Esophagus muscularis mucosa (tissue), 4 donors: ENCODE measurements at regions of chr14 and their contacts with region 1.

Region 1: GRCh38 chr14:23379366-23380196 is 2.7 kb downstream of the CMTM5 start:
- DNase-seq: no peak
- H3K4me3 ChIP-seq: no peak overlapping the region
- H3K27ac ChIP-seq: no peak overlapping the region
- H3K4me1 ChIP-seq: peaks cover 0 to 23% (median 15%) of the 10 kb centered on the region in 4 donors
- H3K27me3 ChIP-seq: peaks cover 0 to 16% (median 0%) of the 10 kb centered on the region in 4 donors
- CTCF ChIP-seq: peak; percentile 87 to 97 (median 92)
- EP300 ChIP-seq: no peak
- POLR2A ChIP-seq: no peak

Region 2: GRCh38 chr14:23245282-23245681 is 134.3 kb before region 1 on chr14:
- intact Hi-C with region 1: no loop called
- DNase-seq: no peak
- H3K4me3 ChIP-seq: no peak overlapping the region
- H3K27ac ChIP-seq: no peak overlapping the region
- H3K4me1 ChIP-seq: no peaks in the 10 kb centered on the region
- H3K27me3 ChIP-seq: no peaks in the 10 kb centered on the region
- CTCF ChIP-seq: no peak
- EP300 ChIP-seq: no peak
- POLR2A ChIP-seq: no peak

Region 3: GRCh38 chr14:23259426-23259825 is 120.2 kb before region 1 on chr14:
- intact Hi-C with region 1: loop called (anchors 2 kb)
- DNase-seq: no peak
- H3K4me3 ChIP-seq: no peak overlapping the region
- H3K27ac ChIP-seq: no peak overlapping the region
- H3K4me1 ChIP-seq: peaks cover 0 to 13% (median 4%) of the 10 kb centered on the region in 4 donors
- H3K27me3 ChIP-seq: peaks cover 0 to 4% (median 0%) of the 10 kb centered on the region in 4 donors
- CTCF ChIP-seq: no peak
- EP300 ChIP-seq: no peak
- POLR2A ChIP-seq: no peak

Region 4: DNA sequence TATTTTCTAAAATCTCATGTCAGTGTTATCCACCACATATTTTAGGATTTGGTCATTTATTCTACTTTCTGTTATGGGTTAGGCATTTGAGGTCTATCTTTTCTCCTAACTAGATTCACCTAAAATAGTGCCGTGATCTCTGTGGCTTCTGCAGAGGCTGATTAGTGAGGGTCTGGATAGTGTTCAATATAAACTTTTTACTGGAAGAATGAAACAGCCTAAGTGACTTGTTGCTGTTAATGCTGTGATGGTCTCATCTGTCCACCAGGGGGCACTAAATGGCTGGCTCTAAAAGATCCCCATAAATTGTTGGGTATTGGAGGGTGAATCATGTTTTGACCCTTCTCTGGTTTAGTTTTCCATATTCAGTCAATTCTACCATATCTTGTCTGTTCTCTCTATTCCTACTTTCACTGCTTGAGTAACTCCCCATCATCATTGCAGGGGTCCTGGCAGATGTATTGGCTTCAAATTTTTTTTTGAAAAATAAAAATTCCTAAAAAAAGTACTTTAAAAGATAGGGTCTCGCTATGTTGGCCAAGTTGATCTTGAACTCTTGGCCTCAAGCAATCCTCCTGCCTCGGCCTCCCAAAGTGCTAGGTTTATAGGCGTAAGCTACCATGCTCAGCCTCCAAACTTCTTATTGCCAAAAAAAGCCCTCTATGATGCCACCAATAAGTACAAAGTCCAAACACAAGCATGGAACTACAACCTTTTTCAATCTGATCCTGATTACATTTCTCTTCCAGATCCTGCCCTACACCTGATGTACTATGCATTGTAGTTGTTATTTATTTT is 51.4 kb before region 1 on chr14:
- intact Hi-C with region 1: loop called (anchors 1 kb)
- DNase-seq: no peak
- H3K4me3 ChIP-seq: no peak overlapping the region
- H3K27ac ChIP-seq: no peak overlapping the region
- H3K4me1 ChIP-seq: peaks cover 5 to 15% (median 9%) of the 10 kb centered on the region in 4 donors
- H3K27me3 ChIP-seq: no peaks in the 10 kb centered on the region
- CTCF ChIP-seq: peak; percentile 83 to 85 (median 84)
- EP300 ChIP-seq: no peak
- POLR2A ChIP-seq: no peak

Region 5: DNA sequence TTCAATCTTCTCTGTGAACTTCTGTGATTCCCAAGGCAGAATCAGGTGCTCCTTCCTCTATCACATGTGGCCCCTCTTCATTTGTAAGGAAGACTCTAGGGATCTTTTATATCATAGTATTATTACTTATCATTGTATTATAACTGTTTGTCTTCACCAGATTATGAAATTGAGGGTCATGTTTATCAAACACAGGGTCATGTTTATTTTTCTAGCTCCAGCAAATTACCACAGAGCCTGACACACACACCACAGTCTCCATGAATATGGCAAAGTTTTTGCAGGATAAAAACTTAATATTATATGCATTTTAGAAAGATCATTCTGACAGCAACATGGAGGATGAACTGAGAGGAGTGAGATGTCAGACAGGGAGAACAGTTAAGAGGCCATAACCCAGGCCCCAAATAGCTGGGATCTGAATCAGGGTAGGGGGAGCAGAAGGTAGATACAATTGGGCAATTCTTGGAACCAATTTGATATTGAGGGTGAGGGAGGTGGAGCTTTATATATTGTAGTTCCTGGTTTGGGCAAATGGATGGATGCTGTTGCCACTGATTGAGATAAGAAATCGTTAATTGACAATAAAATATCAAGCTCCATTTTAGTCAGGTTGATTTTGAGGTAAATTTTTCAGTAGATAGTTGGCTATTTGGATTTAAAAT is 387.3 kb after region 1 on chr14:
- intact Hi-C with region 1: no loop called
- DNase-seq: no peak
- H3K4me3 ChIP-seq: no peak overlapping the region
- H3K27ac ChIP-seq: no peak overlapping the region
- H3K4me1 ChIP-seq: no peaks in the 10 kb centered on the region
- H3K27me3 ChIP-seq: no peaks in the 10 kb centered on the region
- CTCF ChIP-seq: no peak
- EP300 ChIP-seq: no peak
- POLR2A ChIP-seq: no peak